ENCODE measurements at regions of chr19 and their contacts with region 1.

Region 1: GRCh38 chr19:4007021-4007835 is at the start of gene PIAS4:
- DNase-seq: peak; percentile 96
- H3K4me3 Mint-ChIP-seq: peak within 1 kb of the TSS; percentile 83
- H3K27ac Mint-ChIP-seq: peak within 1 kb of the TSS; percentile 5
- H3K4me1 Mint-ChIP-seq: peaks cover 27% of the 10 kb centered on the region
- H3K27me3 Mint-ChIP-seq: no peaks in the 10 kb centered on the region
- total RNA-seq, gene PIAS4: 22.5 to 24.4 TPM

Region 2: GRCh38 chr19:4065430-4066175 is 58.4 kb after region 1 on chr19:
- CTCF ChIA-PET with region 1: no interaction called
- POLR2A ChIA-PET with region 1: interaction called, 3 read pairs
- intact Hi-C with region 1: loop called (anchors 1 kb)
- DNase-seq: peak; percentile 97
- H3K4me3 Mint-ChIP-seq: peak overlapping the region; percentile 57
- H3K27ac Mint-ChIP-seq: no peak overlapping the region
- H3K4me1 Mint-ChIP-seq: peaks cover 41% of the 10 kb centered on the region
- H3K27me3 Mint-ChIP-seq: no peaks in the 10 kb centered on the region

Region 3: DNA sequence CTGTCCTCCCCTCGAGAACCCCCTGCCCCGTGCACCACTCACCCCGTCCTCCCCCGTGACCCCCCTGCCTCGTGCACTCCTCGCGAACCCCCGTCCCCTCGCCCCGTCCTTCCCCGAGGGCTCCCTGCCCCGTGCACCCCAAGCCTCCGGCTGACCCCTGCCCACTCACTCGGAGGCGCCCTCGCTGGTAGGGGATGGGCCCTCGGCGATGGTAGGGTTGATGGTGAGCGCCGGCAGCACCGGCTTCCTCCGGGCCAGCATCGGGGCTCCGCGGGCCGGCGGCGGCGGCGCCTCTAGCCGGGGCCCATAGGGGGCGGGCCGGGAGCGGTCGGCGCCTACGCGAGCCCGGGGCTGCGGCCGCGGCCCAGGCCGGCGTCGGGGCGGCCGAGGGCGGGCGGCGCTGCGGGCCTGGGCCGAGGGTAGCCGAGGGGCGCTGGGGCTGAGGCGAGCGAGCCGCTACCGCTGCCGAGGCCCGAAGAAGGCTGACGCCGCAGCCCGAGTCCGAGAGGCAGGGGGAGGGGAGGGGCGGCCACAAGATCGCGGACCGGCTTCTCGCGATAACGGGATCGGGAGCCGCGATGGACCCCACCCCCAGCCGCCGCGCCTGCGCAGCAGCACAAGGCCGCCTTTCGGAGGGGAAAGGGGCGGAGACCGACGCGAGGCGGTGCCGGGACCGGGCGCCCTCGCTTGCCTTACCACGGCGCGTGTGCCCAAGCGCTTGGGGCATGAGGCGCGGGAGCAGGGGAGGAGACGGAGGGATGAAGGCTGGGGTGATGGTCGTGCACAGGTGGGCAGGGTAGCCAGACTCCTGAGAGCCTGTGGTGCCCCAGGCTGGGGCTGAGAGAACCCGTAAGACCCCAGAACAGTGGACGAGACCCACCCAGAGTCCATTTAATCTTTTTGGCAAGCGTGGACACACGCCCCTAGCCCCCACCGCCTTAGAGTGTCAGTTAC is 116.7 kb after region 1 on chr19 and contains the start of gene MAP2K2:
- CTCF ChIA-PET with region 1: no interaction called
- POLR2A ChIA-PET with region 1: no interaction called
- intact Hi-C with region 1: loop called (anchors 5 kb)
- DNase-seq: peak; percentile 97
- H3K4me3 Mint-ChIP-seq: peak within 1 kb of the TSS; percentile 86
- H3K27ac Mint-ChIP-seq: peak within 1 kb of the TSS; percentile 82
- H3K4me1 Mint-ChIP-seq: peaks cover 21% of the 10 kb centered on the region
- H3K27me3 Mint-ChIP-seq: no peaks in the 10 kb centered on the region
- total RNA-seq, gene MAP2K2: 128 to 129 TPM

Region 4: GRCh38 chr19:4375164-4376027 is 368.2 kb after region 1 on chr19:
- CTCF ChIA-PET with region 1: no interaction called
- POLR2A ChIA-PET with region 1: no interaction called
- intact Hi-C with region 1: loop called (anchors 1 kb)
- DNase-seq: no peak
- H3K4me3 Mint-ChIP-seq: no peak overlapping the region
- H3K27ac Mint-ChIP-seq: peak overlapping the region; percentile 25
- H3K4me1 Mint-ChIP-seq: peaks cover 66% of the 10 kb centered on the region
- H3K27me3 Mint-ChIP-seq: no peaks in the 10 kb centered on the region

Measured in activated CD4-positive, alpha-beta memory T cell treated with anti-CD3 and anti-CD28 coated beads for 36 hours (primary cell).